Activated naive CD4-positive, alpha-beta T cell treated with anti-CD3 and anti-CD28 coated beads for 36 hours (primary cell): ENCODE measurements at regions of chr10 and their contacts with region 1.

Region 1: GRCh38 chr10:5629303-5630111 is 36.9 kb downstream of the ASB13 start:
- DNase-seq: peak; percentile 96
- H3K4me3 Mint-ChIP-seq: peak overlapping the region; percentile 31
- H3K27ac Mint-ChIP-seq: peak overlapping the region; percentile 73
- H3K4me1 Mint-ChIP-seq: peaks cover 29% of the 10 kb centered on the region
- H3K27me3 Mint-ChIP-seq: no peaks in the 10 kb centered on the region

Region 2: GRCh38 chr10:5446390-5446926 is 183.0 kb before region 1 on chr10:
- CTCF ChIA-PET with region 1: interaction called, 244 read pairs
- intact Hi-C with region 1: loop called (anchors 1 kb)
- DNase-seq: peak; percentile 77
- H3K4me3 Mint-ChIP-seq: peak overlapping the region; percentile 61
- H3K27ac Mint-ChIP-seq: peak overlapping the region; percentile 33
- H3K4me1 Mint-ChIP-seq: peaks cover 48% of the 10 kb centered on the region
- H3K27me3 Mint-ChIP-seq: no peaks in the 10 kb centered on the region

Region 3: DNA sequence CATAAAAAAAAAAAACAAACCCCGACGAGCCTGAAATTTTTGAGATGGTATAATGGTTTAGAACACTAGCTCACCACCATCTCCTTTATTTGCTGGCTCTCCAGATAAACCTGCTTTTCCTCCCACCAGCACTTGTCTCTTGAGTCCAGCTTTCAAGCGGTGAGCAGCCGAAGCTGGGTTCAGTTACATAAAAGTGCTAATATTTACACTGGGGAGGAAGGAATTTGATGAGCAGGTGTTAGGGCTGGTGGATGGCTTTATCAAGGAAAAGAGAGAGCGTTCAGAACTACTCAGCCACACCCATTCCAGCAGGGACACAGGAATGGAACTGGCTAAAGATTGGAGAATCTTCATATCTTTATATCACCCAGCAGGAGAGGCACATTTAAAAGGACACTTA is 111.4 kb before region 1 on chr10:
- CTCF ChIA-PET with region 1: no interaction called
- intact Hi-C with region 1: no loop called
- DNase-seq: no peak
- H3K4me3 Mint-ChIP-seq: no peak overlapping the region
- H3K27ac Mint-ChIP-seq: no peak overlapping the region
- H3K4me1 Mint-ChIP-seq: peaks cover 6% of the 10 kb centered on the region
- H3K27me3 Mint-ChIP-seq: no peaks in the 10 kb centered on the region

Region 4: GRCh38 chr10:5645375-5645774 is 15.9 kb after region 1 on chr10:
- CTCF ChIA-PET with region 1: interaction called, 15 read pairs
- intact Hi-C with region 1: no loop called
- DNase-seq: no peak
- H3K4me3 Mint-ChIP-seq: no peak overlapping the region
- H3K27ac Mint-ChIP-seq: no peak overlapping the region
- H3K4me1 Mint-ChIP-seq: peaks cover 1% of the 10 kb centered on the region
- H3K27me3 Mint-ChIP-seq: no peaks in the 10 kb centered on the region

Region 5: DNA sequence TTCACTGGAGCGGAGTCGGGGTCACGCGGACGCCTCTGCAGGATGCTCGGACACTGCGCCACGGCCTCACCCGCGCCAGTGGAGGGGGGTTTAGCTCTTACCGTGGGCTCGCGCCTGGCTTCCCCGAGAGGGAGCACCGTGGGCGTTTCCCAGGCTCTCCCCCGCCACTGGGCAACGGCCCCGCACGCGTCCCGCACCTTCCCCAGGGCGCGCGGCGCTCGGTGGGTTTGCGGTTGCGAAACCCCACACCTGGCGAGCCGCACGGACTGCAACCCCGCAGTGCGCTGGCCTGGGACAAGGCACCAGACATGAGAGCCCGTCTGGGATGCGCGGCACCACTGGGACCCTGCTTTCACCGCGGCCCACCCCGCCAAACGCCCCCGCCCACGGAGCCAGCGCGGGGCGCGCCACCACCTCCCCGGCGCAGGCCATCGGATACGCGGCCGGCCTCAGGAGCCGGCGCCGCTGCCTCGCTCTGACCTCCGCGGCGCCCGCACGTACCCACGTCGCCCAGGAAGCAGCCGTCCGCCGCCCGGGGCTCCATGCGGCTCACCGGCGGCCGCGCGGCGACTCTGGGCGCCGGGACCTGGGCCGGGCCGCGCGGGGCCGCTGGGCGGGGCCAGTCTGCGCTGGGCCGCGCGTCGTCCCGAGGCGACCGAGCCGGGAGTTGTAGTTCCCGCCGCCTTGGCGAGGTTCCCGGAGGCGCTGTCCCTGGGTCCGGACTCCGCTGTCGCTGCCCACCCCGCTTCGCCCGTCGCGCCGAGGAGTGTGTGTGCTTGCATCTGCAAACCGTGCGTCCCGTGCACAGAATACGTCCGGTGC is 36.7 kb after region 1 on chr10 and contains the start of gene ASB13:
- CTCF ChIA-PET with region 1: interaction called, 11 read pairs
- intact Hi-C with region 1: loop called (anchors 2 kb)
- DNase-seq: peak; percentile 45
- H3K4me3 Mint-ChIP-seq: peak within 1 kb of the TSS; percentile 86
- H3K27ac Mint-ChIP-seq: peak within 1 kb of the TSS; percentile 39
- H3K4me1 Mint-ChIP-seq: peaks cover 13% of the 10 kb centered on the region
- H3K27me3 Mint-ChIP-seq: no peaks in the 10 kb centered on the region
- total RNA-seq, gene ASB13: 7.0 to 7.2 TPM

Region 6: GRCh38 chr10:5813287-5814109 is 184.0 kb after region 1 on chr10 and contains the start of gene GDI2:
- CTCF ChIA-PET with region 1: interaction called, 3 read pairs
- intact Hi-C with region 1: loop called (anchors 1 kb)
- DNase-seq: peak; percentile 98
- H3K4me3 Mint-ChIP-seq: peak within 1 kb of the TSS; percentile 84
- H3K27ac Mint-ChIP-seq: peak within 1 kb of the TSS; percentile 90
- H3K4me1 Mint-ChIP-seq: peaks cover 66% of the 10 kb centered on the region
- H3K27me3 Mint-ChIP-seq: no peaks in the 10 kb centered on the region
- total RNA-seq, gene GDI2: 277 to 288 TPM

Region 7: GRCh38 chr10:5889624-5890451 is 260.3 kb after region 1 on chr10 and contains the starts of genes ANKRD16 and FBH1:
- CTCF ChIA-PET with region 1: no interaction called
- intact Hi-C with region 1: loop called (anchors 1 kb)
- DNase-seq: peak; percentile 97
- H3K4me3 Mint-ChIP-seq: peak within 1 kb of the TSS; percentile 92
- H3K27ac Mint-ChIP-seq: peak within 1 kb of the TSS; percentile 74
- H3K4me1 Mint-ChIP-seq: peaks cover 55% of the 10 kb centered on the region
- H3K27me3 Mint-ChIP-seq: no peaks in the 10 kb centered on the region
- total RNA-seq, gene ANKRD16: 3.6 to 3.9 TPM
- total RNA-seq, gene FBH1: 40.4 to 42.7 TPM